A549 (cell line): ENCODE measurements at regions of chr6 and their contacts with region 1.

Region 1: GRCh38 chr6:106512048-106512967 is 117.0 kb downstream of the RTN4IP1 start:
- DNase-seq: peak in 1 of 2 experiments; percentile 13
- ATAC-seq: peak; percentile 49 to 69
- H3K4me3 ChIP-seq: peak overlapping the region; percentile 70
- H3K27ac ChIP-seq: peak overlapping the region; percentile 50 to 87; a peak in 5 of 6 replicates
- H3K4me1 ChIP-seq: peaks cover 9% of the 10 kb centered on the region; the same call in 2 of the 3 replicates
- CTCF ChIP-seq: 0 out of 3 replicates have a peak, but pooled peaks have one; percentile 7
- EP300 ChIP-seq: no peak
- POLR2A ChIP-seq: no peak
- RAD21 ChIP-seq: peak in 1 of 2 experiments; percentile 14; a peak in 1 of 5 replicates

Region 2: GRCh38 chr6:105810105-105810921 is 702.0 kb before region 1 on chr6:
- CTCF ChIA-PET with region 1: no interaction called
- POLR2A ChIA-PET with region 1: no interaction called
- DNase-seq: peak; percentile 9 to 79
- ATAC-seq: peak; percentile 74 to 88
- H3K4me3 ChIP-seq: no peak overlapping the region
- H3K27ac ChIP-seq: peak overlapping the region; percentile 77 to 86
- H3K4me1 ChIP-seq: peaks cover 40% of the 10 kb centered on the region
- CTCF ChIP-seq: no peak
- EP300 ChIP-seq: no peak; a peak in 1 of 5 replicates
- POLR2A ChIP-seq: no peak
- RAD21 ChIP-seq: 0 out of 5 replicates have a peak, but pooled peaks have one; percentile 19 to 30

Region 3: GRCh38 chr6:106194949-106195921 is 317.1 kb before region 1 on chr6:
- CTCF ChIA-PET with region 1: no interaction called
- POLR2A ChIA-PET with region 1: no interaction called
- DNase-seq: no peak
- ATAC-seq: no peak
- H3K4me3 ChIP-seq: no peak overlapping the region
- H3K27ac ChIP-seq: peak overlapping the region in 1 of 2 experiments; percentile 45; a peak in 1 of 6 replicates
- H3K4me1 ChIP-seq: peaks cover 12% of the 10 kb centered on the region; the same call in 2 of the 3 replicates
- CTCF ChIP-seq: no peak
- EP300 ChIP-seq: no peak
- POLR2A ChIP-seq: no peak
- RAD21 ChIP-seq: no peak

Region 4: DNA sequence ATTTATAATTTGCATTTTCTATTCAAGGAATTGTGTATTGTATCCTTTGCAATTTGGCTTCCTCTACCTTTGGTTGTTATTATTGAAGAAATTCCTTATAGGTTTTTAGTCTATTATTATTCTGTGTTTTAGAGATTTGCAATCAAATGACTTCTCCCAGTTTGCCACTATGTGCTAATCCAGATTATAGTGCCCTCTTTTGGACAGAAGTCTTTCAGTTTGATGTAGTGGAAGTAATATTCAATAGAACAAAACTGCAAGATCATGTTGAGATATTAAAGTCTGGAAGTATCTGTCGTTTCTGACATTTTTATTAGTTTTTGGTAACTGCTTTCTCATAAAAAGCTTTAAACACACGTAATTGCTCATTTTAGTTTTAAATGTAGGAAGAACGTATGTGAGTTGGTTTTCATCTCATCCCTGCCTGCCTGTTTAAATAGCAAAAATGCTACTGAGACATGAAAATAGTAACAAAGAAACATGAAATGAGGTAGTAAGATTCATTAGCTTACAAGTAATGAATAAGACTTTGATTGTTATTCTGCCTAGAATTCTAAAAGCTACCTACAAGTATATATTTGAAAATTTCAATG is 44.2 kb after region 1 on chr6:
- CTCF ChIA-PET with region 1: interaction called, 22 read pairs
- POLR2A ChIA-PET with region 1: no interaction called
- DNase-seq: peak in 1 of 2 experiments; percentile 26
- ATAC-seq: peak in 1 of 2 experiments; percentile 30; a peak in 1 of 6 replicates
- H3K4me3 ChIP-seq: no peak overlapping the region
- H3K27ac ChIP-seq: no peak overlapping the region
- H3K4me1 ChIP-seq: peaks cover 29% of the 10 kb centered on the region
- CTCF ChIP-seq: peak; percentile 49
- EP300 ChIP-seq: no peak
- POLR2A ChIP-seq: no peak
- RAD21 ChIP-seq: peak; percentile 61 to 62